Esophagus squamous epithelium (tissue), 5 donors: ENCODE measurements at regions of chr14 and their contacts with region 1.

Region 1: DNA sequence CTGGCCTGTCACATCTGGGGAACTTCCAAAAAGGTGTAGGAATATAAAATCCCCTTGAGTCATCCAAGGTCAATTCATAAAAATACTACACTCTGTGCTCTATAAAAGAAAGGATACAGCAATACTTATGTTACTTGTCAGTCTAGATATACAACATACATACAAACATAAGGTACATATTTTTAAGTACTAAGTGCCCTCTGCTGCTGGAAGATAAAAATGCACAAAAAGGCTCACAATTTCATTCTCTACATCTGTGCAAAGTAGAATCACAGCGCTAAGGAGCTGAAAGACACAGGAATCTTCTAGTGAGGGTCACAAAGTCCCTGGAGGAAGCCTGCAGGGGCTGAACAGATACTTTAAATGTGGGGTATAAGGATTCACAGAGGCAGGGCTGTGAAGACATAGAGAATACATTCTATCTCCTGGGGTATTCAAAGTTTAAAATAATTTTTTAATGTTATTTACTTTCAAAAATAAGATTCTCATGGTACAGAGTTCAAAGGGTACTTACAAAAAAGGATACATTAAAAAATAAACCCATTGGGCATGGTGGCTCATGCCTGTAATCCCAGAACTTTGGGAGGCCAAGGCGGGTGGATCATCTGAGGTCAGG is 10.2 kb upstream of the GOLGA5 start:
- DNase-seq: no peak
- H3K4me3 ChIP-seq: no peak overlapping the region
- H3K27ac ChIP-seq: no peak overlapping the region
- H3K4me1 ChIP-seq: peaks cover 0 to 9% (median 0%) of the 10 kb centered on the region in 3 donors
- H3K27me3 ChIP-seq: no peaks in the 10 kb centered on the region
- CTCF ChIP-seq: peak; percentile 43 to 75 (median 55)
- POLR2A ChIP-seq: no peak

Region 2: GRCh38 chr14:92670160-92670559 is 113.8 kb before region 1 on chr14:
- intact Hi-C with region 1: no loop called
- DNase-seq: no peak
- H3K4me3 ChIP-seq: no peak overlapping the region
- H3K27ac ChIP-seq: no peak overlapping the region
- H3K4me1 ChIP-seq: peaks cover 0 to 13% (median 0%) of the 10 kb centered on the region in 3 donors
- H3K27me3 ChIP-seq: no peaks in the 10 kb centered on the region
- CTCF ChIP-seq: peak in 1 of 6 experiments; percentile 14
- POLR2A ChIP-seq: no peak

Region 3: DNA sequence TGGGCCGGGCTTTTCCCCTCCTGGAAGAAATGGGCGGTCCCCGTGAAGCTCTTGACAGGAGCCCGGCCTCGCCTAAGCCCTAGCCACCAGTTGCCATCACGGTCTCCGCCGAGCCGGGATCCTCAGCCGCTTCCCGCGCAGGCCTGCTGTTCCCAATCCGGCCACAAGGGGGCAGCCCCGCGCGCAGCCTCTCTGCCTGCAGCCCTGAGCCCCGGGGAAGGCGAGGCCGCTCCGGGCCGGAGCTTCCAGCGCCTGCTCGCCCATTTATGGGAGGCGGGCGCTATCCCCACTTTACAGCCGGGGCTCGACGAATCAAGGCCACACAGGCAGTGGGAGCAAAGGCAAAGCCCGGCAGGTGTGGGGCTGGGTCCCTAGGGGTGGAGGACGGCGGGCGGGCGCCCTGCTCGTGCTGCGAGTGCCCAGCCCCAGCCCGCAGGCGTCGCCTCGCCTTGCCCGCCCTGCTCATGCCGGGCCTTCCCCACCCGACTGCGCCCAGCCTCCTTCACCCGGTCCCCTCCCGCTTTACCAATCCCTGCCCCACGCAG is 97.0 kb before region 1 on chr14:
- intact Hi-C with region 1: loop called (anchors 10 kb)
- DNase-seq: no peak
- H3K4me3 ChIP-seq: peak overlapping the region; percentile 11 to 62 (median 39)
- H3K27ac ChIP-seq: peak overlapping the region in 1 of 4 donors; percentile 5
- H3K4me1 ChIP-seq: peaks cover 14 to 23% (median 16%) of the 10 kb centered on the region in 3 donors
- H3K27me3 ChIP-seq: peaks cover 0 to 15% (median 0%) of the 10 kb centered on the region in 4 donors
- CTCF ChIP-seq: peak; percentile 88 to 98 (median 96)
- POLR2A ChIP-seq: no peak

Region 4: DNA sequence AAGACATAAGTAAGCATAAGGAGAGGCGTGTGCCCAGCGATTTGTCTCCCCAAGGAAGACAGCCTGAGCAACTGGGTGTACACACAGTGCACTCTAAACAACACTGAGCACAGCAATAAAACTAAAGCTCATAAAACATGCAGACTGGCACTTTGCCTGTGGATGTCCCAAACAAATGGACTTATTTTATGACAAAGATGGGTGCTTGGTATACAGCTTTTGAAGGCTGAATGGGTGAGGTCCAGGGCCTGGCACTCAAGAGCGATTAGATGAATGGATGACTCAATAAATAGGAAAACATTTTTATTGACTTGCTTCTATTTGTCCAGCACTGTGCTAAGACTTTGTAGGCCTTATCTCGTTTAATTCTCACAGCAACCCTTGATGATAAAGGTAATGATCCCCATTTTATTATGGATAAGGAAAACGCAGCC is 64.0 kb before region 1 on chr14:
- intact Hi-C with region 1: loop called (anchors 10 kb)
- DNase-seq: no peak
- H3K4me3 ChIP-seq: no peak overlapping the region
- H3K27ac ChIP-seq: peak overlapping the region in 3 of 4 donors; percentile 52 to 71 (median 65)
- H3K4me1 ChIP-seq: peaks cover 0 to 20% (median 6%) of the 10 kb centered on the region in 3 donors
- H3K27me3 ChIP-seq: no peaks in the 10 kb centered on the region
- CTCF ChIP-seq: no peak
- POLR2A ChIP-seq: no peak